Activated T-helper 1 cell treated with anti-CD3 and anti-CD28 coated beads, Interleukin-12 subunit alpha, Interleukin-12 subunit beta, Interleukin-2, Interleukin-4 antibody, amounts not matched to agents 30 ng/mL and 10 ng/mL and 1 ng/mL, durations not matched to agents 14 hours and 24 hours and 36 hours (primary cell): ENCODE measurements at regions of chr10 and their contacts with region 1.

Region 1: DNA sequence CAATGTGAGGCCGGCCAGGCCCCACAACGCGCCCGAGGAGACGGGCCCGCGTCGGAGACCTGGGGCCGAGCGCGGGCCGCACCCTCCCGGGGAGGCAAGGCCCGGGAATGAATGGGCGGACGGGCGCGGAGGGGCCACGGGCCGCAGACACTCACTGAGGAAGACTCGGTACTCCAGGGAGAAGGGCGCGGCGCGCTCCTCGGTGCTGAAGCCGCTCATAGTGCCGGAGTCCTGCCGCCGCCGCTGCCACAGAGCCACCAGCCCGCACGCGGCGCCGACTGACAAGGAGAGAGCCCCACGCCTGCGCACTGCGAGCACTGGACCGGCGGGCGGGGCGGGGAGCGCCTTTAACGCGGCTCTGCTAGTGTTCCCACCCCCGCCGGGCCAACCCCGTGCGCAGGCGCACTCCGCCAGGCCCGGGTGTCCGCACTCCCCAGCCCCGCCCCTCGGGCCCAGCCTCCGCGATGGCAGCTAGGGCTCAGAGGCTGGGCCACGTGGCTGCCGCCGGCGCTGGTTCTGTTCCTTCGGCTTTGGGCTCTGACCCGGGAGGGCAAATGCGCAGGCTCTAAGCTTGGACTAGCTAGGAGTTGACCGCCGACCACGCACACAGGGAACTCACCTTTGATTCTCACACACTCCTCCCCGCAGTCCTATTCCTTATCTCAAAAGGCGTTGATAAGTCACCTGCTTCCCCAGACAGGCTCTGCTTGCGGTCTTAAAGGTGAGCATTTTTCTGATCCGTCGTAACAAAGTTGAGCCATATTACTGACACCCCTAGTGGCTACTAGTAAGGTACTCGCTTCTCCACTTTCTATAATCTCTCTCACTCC is at the start of gene PPA1:
- DNase-seq: peak; percentile 100
- H3K4me3 Mint-ChIP-seq: peak within 1 kb of the TSS; percentile 86
- H3K27ac Mint-ChIP-seq: peak within 1 kb of the TSS; percentile 84
- H3K4me1 Mint-ChIP-seq: peaks cover 44% of the 10 kb centered on the region
- H3K27me3 Mint-ChIP-seq: no peaks in the 10 kb centered on the region
- total RNA-seq, gene PPA1: 374 and 393 TPM in 2 replicates

Region 2: GRCh38 chr10:70146489-70147258 is 86.7 kb before region 1 on chr10 and contains the start of gene TYSND1:
- intact Hi-C with region 1: loop called (anchors 1 kb)
- DNase-seq: peak; percentile 90
- H3K4me3 Mint-ChIP-seq: peak within 1 kb of the TSS; percentile 92
- H3K27ac Mint-ChIP-seq: peak within 1 kb of the TSS; percentile 96
- H3K4me1 Mint-ChIP-seq: peaks cover 8% of the 10 kb centered on the region
- H3K27me3 Mint-ChIP-seq: no peaks in the 10 kb centered on the region
- total RNA-seq, gene TYSND1: 12.6 and 12.7 TPM in 2 replicates

Region 3: DNA sequence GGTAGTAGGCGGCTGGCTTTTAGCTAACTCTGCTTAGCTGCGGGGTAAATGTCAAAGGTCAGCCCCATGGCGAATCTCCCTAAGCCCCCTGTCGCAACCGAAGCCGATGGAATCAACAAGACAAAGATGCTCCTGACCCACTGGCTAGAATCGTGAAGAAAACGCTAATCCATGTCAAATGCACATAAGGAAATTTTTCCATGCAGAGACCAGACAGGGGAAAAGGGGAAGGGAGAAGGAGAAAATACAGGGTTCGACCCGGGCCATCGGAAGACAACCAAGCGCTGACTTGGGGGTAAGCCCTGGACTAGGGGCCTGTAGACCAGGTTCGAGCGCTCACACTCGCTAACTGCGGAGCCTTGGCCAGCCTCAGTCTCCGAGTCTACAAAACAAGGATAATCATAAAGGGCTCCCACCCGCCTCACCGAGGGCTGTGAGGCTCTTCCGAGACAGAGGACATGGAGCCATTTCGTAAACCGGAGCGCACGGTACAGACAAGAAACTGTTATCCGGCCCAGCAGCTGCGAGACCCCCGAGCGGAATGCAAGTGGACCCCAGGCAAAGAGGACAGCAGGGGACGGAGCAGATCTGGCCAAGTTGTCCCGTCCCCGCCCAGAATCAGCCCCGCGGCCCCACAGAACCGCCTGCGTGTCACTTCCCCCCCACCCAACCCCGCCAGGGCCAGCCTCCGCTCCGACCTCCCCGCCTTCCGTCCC is 63.5 kb before region 1 on chr10:
- intact Hi-C with region 1: loop called (anchors 1 kb)
- DNase-seq: no peak
- H3K4me3 Mint-ChIP-seq: peak overlapping the region; percentile 96
- H3K27ac Mint-ChIP-seq: peak overlapping the region; percentile 83
- H3K4me1 Mint-ChIP-seq: peaks cover 65% of the 10 kb centered on the region
- H3K27me3 Mint-ChIP-seq: no peaks in the 10 kb centered on the region

Region 4: GRCh38 chr10:70272925-70273316 is 39.6 kb after region 1 on chr10:
- intact Hi-C with region 1: loop called (anchors 1 kb)
- DNase-seq: no peak
- H3K4me3 Mint-ChIP-seq: peak overlapping the region; percentile 26
- H3K27ac Mint-ChIP-seq: peak overlapping the region; percentile 67
- H3K4me1 Mint-ChIP-seq: peaks cover 26% of the 10 kb centered on the region
- H3K27me3 Mint-ChIP-seq: peaks cover 10% of the 10 kb centered on the region

Region 5: DNA sequence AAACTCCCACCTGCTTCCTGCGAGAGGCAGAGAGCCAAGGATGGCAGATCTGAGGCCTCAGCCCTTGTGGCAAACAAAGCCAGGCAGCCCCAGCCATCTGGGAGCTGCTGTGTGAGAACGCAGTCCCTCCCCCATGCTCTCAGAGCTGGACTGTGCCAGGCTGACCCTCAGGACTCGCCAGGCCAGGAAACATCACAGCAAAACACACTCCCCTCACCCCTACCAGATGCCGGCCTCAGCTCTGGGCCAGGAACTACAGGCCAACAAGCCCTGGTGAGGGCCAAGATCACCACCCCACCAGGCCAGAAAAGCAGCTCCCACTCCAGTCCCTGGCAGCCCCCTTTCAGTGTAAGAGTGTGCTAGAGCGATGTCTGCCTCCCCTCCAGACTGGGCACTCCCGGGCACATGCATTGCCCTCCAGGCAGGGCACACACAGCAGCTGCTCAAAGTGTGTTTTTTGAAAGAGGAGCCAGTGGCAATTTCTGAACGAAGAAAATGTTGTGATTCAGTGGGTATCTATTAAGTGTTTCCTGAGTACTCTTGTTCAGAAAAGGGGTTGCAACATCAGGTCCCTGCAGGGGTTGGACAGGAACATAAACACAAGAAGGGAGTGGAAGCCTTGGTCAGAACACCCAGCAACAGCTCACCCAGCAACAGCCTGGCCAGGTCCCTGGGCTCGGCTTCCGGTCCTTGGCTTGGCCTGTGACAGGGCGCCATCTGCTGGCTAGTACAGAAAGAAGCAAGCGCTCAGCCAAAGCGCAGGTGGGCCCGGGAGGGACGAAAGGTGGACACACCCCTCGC is 130.8 kb after region 1 on chr10:
- intact Hi-C with region 1: loop called (anchors 1 kb)
- DNase-seq: peak; percentile 81
- H3K4me3 Mint-ChIP-seq: peak overlapping the region; percentile 39
- H3K27ac Mint-ChIP-seq: no peak overlapping the region
- H3K4me1 Mint-ChIP-seq: peaks cover 14% of the 10 kb centered on the region
- H3K27me3 Mint-ChIP-seq: no peaks in the 10 kb centered on the region

Region 6: GRCh38 chr10:70404036-70404786 is 170.9 kb after region 1 on chr10 and contains the start of gene EIF4EBP2:
- intact Hi-C with region 1: loop called (anchors 1 kb)
- DNase-seq: peak; percentile 99
- H3K4me3 Mint-ChIP-seq: peak within 1 kb of the TSS; percentile 96
- H3K27ac Mint-ChIP-seq: peak within 1 kb of the TSS; percentile 92
- H3K4me1 Mint-ChIP-seq: peaks cover 40% of the 10 kb centered on the region
- H3K27me3 Mint-ChIP-seq: peaks cover 2% of the 10 kb centered on the region
- total RNA-seq, gene EIF4EBP2: 36.6 and 37.7 TPM in 2 replicates